Left ventricle myocardium superior (tissue), 1 donor: ENCODE measurements at regions of chr5 and their contacts with region 1.

Region 1: DNA sequence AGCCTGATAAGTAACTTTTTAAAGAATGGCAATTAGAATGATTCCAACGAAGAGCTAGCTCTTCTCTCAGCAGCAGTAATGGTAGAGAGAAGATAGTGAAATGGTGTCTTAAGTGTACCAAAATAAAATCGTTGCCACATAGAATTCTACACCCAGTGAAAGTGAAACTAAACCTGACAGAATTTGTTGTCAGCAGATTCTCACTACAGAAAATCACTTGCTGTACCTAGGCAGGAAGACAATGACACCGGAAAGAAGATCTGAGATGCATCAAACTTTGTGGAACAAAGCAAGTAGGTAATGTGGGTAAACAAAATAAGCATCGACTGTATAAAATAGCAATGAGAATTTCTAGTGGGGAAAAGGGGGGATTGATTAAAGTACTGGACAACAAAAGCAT is 20.7 kb upstream of the EBF1 start:
- DNase-seq: no peak
- ATAC-seq: no peak

Region 2: GRCh38 chr5:158084292-158084691 is 1036.2 kb before region 1 on chr5:
- intact Hi-C with region 1: loop called (anchors 10 kb)
- DNase-seq: no peak
- ATAC-seq: no peak